B cell (primary cell): ENCODE measurements at regions of chr15 and their contacts with region 1.

Region 1: DNA sequence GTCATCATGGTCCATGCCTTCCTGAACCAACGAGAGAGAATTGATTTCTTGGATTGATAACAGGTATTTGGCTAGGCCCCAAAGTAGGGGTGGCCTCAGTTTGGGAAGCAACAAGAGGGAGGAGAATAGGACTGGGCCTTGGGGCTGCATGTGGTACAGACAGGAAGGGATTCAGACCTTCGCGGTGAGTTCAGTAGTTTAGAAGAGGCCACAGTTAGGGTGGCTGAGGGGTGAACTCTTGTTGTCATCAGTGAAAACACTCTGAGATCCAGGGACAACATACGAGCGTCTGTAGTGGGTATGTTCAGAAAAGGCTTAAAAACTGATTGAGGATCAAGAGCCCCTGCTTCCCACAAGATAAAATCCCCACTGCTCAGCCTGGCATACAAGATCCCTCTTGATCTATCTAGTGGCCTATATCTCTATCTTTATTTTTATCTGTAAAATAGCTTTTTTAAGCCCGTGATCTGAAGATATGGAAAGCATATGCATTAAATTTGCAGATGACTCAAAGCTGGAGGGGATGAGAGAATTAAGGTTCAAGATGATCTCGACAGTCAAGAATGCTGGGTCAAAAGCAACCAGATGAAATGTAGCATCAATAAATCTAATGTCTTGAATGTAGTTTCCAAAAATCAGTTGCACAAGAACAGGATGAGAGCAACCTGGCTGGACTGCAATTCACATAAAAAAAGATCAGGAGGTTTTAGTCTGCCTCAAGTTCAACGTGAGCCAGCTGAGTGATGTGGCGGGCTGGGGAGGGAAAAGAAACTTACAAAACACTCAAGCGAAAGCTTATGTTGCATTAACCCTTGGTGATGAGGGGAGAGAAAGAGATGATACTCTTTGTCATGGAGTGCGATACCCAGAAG is 221.1 kb upstream of the TLE3 start:
- DNase-seq: peak; percentile 40
- ATAC-seq: peak; percentile 37
- H3K4me3 ChIP-seq: peak overlapping the region in 3 of 5 experiments; percentile 24 to 34 (median 28)
- H3K4me3 Mint-ChIP-seq: peak overlapping the region; percentile 79
- H3K27ac ChIP-seq: peak overlapping the region; percentile 86 to 97
- H3K27ac Mint-ChIP-seq: peak overlapping the region; percentile 91
- H3K4me1 ChIP-seq: peaks cover 58 to 68% of the 10 kb centered on the region in 2 donors
- H3K4me1 Mint-ChIP-seq: peaks cover 61% of the 10 kb centered on the region
- H3K27me3 ChIP-seq: no peaks in the 10 kb centered on the region
- H3K27me3 Mint-ChIP-seq: no peaks in the 10 kb centered on the region
- CTCF ChIP-seq: no peak

Region 2: DNA sequence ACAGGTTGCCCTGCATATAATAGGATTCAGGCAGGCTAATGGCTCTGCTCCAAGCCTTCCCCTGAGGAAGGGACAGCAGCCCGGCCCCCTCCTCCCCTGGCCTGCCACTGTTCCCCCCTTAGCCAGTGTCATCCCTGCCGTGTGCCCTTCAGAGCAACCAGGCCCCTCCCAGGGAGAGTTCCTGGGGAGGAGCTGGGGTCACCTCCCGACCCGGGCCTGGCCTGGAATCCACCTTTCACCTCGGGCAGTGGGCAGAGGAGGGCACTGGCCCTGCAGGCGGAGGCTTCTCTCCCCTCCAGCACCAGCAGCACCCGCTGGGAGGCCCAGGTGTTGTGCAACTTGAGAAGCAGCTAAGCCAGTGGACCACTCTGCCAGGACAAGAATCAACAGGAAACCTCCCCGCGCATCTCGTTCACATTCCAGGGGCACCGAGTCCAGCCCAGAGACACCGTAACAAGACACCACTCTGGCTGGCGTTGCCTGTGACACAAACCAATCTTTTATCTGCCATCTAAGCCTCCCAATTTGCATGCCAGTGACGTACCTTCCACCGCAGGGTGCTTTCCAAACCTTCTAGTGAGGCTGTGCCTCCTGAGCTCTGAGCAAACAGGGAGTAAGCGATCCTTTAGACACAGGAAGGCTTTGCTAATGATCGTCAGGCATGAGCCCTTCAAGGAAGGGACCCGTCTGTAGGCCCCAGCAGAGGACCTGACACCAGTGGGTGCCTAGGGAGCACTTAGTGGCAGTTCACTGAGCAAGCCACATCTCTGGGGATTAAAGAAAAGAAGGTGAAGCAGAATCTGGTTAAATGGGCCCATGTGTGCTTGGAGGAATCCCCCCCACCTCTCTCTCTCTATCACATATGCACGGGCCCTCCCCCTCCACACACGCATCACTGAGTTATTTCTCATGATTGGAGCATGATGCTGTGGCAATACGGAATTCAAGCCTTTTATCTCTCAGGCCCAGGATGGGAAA is 122.2 kb before region 1 on chr15:
- CTCF ChIA-PET with region 1: no interaction called
- POLR2A ChIA-PET with region 1: no interaction called
- intact Hi-C with region 1: loop called (anchors 2 kb)
- DNase-seq: peak; percentile 86
- ATAC-seq: peak; percentile 85
- H3K4me3 ChIP-seq: no peak overlapping the region
- H3K4me3 Mint-ChIP-seq: peak overlapping the region; percentile 72
- H3K27ac ChIP-seq: no peak overlapping the region
- H3K27ac Mint-ChIP-seq: peak overlapping the region; percentile 89
- H3K4me1 ChIP-seq: peaks cover 33 to 57% of the 10 kb centered on the region in 2 donors
- H3K4me1 Mint-ChIP-seq: peaks cover 51% of the 10 kb centered on the region
- H3K27me3 ChIP-seq: peaks cover 0 to 16% (median 6%) of the 10 kb centered on the region in 4 experiments
- H3K27me3 Mint-ChIP-seq: peaks cover 26% of the 10 kb centered on the region
- CTCF ChIP-seq: no peak

Region 3: DNA sequence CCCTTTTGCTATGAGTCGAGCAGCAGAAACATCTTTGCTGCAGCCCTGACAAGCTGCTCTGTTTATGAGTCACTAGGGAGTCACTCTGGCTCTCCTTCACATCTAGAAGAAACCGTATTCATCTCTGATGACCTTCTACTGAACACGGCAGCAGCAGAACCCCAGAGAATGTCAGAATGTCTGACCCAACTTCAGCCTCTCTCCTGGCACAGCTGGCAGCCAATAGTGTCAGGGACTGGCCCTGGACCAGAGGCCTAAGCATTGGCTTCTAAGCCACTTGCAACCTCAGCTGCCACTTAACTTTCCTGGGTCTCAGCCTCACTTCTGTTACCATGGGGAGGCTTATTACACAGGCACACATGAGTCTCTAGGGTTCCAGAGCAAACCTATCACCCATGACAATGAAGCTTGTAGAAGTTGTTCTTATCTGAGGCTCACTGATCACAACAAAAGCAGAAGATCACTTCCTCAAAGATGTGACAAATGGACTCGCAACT is 37.0 kb before region 1 on chr15:
- CTCF ChIA-PET with region 1: interaction called, 6 read pairs
- POLR2A ChIA-PET with region 1: interaction called, 5 read pairs
- intact Hi-C with region 1: loop called (anchors 1 kb)
- DNase-seq: peak; percentile 79
- ATAC-seq: peak; percentile 91
- H3K4me3 ChIP-seq: peak overlapping the region in 1 of 5 experiments; percentile 0
- H3K4me3 Mint-ChIP-seq: peak overlapping the region; percentile 59
- H3K27ac ChIP-seq: no peak overlapping the region
- H3K27ac Mint-ChIP-seq: peak overlapping the region; percentile 91
- H3K4me1 ChIP-seq: peaks cover 26 to 39% of the 10 kb centered on the region in 2 donors
- H3K4me1 Mint-ChIP-seq: peaks cover 50% of the 10 kb centered on the region
- H3K27me3 ChIP-seq: peaks cover 0 to 4% (median 0%) of the 10 kb centered on the region in 4 experiments
- H3K27me3 Mint-ChIP-seq: no peaks in the 10 kb centered on the region
- CTCF ChIP-seq: no peak

Region 4: DNA sequence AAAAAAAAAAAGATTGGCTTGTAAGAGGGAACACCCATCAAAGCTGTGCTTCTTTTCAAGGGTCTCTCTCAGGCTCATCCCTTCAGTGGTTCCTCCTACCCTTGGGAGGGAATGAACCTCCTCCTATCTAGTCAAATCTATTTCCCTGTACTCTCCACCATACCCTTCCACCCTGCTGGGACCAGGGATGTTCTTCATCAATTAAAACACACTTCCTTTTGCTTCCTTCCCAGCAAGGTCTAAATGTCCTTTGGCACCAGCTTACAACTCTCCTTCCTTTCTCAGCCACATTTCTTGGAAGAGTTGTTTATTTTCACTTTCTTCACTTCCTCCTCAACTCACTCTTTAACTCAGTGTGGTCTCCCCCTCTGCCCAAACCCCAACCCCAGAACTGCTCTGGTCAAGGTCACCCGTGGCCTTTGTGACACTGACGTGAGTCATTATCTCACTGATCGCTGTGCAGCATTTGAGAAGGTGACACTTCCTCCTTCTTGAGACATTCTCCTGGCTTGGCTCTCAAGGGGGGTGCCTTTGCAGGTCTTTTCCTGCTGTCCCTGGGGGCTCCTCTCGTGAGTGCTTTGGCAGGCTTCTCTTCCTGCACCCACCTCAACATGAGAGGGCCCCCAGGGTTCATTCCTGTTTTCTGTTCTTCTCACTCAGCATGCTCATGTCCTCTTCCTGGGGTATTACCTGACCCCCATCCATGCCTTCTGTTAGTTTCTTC is 10.7 kb before region 1 on chr15:
- CTCF ChIA-PET with region 1: interaction called, 3 read pairs
- POLR2A ChIA-PET with region 1: interaction called, 3 read pairs
- intact Hi-C with region 1: loop called (anchors 1 kb)
- DNase-seq: peak; percentile 73
- ATAC-seq: peak; percentile 92
- H3K4me3 ChIP-seq: no peak overlapping the region
- H3K4me3 Mint-ChIP-seq: peak overlapping the region; percentile 53
- H3K27ac ChIP-seq: no peak overlapping the region
- H3K27ac Mint-ChIP-seq: peak overlapping the region; percentile 62
- H3K4me1 ChIP-seq: peaks cover 18 to 20% of the 10 kb centered on the region in 2 donors
- H3K4me1 Mint-ChIP-seq: peaks cover 28% of the 10 kb centered on the region
- H3K27me3 ChIP-seq: no peaks in the 10 kb centered on the region
- H3K27me3 Mint-ChIP-seq: no peaks in the 10 kb centered on the region
- CTCF ChIP-seq: no peak

Region 5: DNA sequence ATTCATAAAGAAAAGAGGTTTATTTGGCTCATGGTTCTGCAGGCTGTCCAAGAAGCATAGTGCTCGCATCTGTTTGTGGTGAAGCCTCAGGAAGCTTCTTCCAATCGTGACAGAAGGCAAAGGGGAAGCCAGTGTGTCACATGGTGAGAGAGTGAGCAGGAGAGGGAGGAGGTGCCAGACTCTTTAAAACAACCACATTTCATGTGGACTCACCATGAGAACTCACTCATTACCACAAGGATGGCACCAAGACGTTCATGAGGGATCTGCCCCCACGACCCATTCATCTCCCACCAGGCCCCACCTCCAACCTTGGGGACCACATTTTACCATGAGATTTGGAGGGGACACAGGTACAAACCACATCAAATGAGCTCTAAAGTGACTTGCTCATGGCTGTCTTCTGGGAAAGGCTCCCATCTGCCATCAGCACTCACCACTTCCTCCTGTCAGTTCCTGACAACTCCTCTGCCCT is 106.1 kb after region 1 on chr15:
- CTCF ChIA-PET with region 1: no interaction called
- POLR2A ChIA-PET with region 1: no interaction called
- intact Hi-C with region 1: no loop called
- DNase-seq: no peak
- ATAC-seq: no peak
- H3K4me3 ChIP-seq: no peak overlapping the region
- H3K4me3 Mint-ChIP-seq: no peak overlapping the region
- H3K27ac ChIP-seq: no peak overlapping the region
- H3K27ac Mint-ChIP-seq: no peak overlapping the region
- H3K4me1 ChIP-seq: peaks cover 11 to 21% of the 10 kb centered on the region in 2 donors
- H3K4me1 Mint-ChIP-seq: peaks cover 16% of the 10 kb centered on the region
- H3K27me3 ChIP-seq: peaks cover 0 to 7% (median 0%) of the 10 kb centered on the region in 4 experiments
- H3K27me3 Mint-ChIP-seq: peaks cover 8% of the 10 kb centered on the region
- CTCF ChIP-seq: no peak

Region 6: DNA sequence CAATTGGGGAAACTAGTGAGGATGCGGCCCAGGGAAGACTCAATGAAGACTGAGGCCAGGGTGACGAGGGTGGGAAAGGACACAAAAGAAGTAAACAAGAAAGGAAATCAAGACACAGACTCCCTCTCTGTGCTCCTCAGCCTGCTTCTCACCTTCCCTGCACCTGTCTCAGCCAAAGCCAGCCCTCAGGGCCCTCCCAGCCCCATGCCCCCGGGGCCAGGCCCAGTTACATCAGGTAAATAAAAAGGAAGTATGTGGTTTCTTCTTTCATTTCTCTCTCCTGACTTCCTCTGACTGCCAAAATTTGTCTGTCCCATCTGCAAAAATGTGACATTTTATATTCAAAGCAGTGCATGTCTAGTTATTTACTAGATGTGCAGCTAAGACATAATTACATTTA is 116.5 kb after region 1 on chr15:
- CTCF ChIA-PET with region 1: no interaction called
- POLR2A ChIA-PET with region 1: no interaction called
- intact Hi-C with region 1: loop called (anchors 5 kb)
- DNase-seq: peak; percentile 78
- ATAC-seq: peak; percentile 97
- H3K4me3 ChIP-seq: no peak overlapping the region
- H3K4me3 Mint-ChIP-seq: peak overlapping the region; percentile 68
- H3K27ac ChIP-seq: peak overlapping the region; percentile 28 to 41
- H3K27ac Mint-ChIP-seq: peak overlapping the region; percentile 84
- H3K4me1 ChIP-seq: peaks cover 26 to 32% of the 10 kb centered on the region in 2 donors
- H3K4me1 Mint-ChIP-seq: peaks cover 30% of the 10 kb centered on the region
- H3K27me3 ChIP-seq: no peaks in the 10 kb centered on the region
- H3K27me3 Mint-ChIP-seq: no peaks in the 10 kb centered on the region
- CTCF ChIP-seq: no peak